Calu3 (cell line): ENCODE measurements at regions of chr3 and their contacts with region 1.

Region 1: DNA sequence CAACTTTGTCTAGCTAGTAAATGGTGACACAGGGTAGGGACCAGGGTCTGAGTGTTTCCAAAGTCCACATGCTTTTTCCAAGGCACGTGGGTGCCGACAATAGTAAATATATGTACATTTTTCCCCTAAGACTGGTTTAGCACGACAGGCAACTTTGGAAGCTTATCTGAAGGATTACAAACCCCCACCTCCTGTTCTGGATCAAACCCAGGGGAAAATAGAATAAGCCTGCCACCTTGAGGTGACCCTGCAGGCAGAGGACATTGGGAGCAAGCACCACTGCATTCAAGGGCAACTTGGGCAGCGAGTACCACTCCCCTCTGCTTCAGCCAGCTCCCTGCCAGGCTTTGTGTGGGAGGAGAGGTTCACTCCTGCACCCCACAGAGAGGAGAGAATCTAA is 44.8 kb downstream of the KBTBD12 start:
- DNase-seq: peak; percentile 82
- H3K4me3 Mint-ChIP-seq: no peak overlapping the region
- H3K27ac Mint-ChIP-seq: no peak overlapping the region
- H3K4me1 Mint-ChIP-seq: peaks cover 31% of the 10 kb centered on the region
- H3K27me3 Mint-ChIP-seq: no peaks in the 10 kb centered on the region
- CTCF ChIP-seq: peak; percentile 67

Region 2: GRCh38 chr3:127652231-127652995 is 307.4 kb before region 1 on chr3:
- CTCF ChIA-PET with region 1: no interaction called
- intact Hi-C with region 1: loop called (anchors 2 kb)
- DNase-seq: peak; percentile 78
- H3K4me3 Mint-ChIP-seq: no peak overlapping the region
- H3K27ac Mint-ChIP-seq: no peak overlapping the region
- H3K4me1 Mint-ChIP-seq: no peaks in the 10 kb centered on the region
- H3K27me3 Mint-ChIP-seq: no peaks in the 10 kb centered on the region
- CTCF ChIP-seq: peak; percentile 97

Region 3: DNA sequence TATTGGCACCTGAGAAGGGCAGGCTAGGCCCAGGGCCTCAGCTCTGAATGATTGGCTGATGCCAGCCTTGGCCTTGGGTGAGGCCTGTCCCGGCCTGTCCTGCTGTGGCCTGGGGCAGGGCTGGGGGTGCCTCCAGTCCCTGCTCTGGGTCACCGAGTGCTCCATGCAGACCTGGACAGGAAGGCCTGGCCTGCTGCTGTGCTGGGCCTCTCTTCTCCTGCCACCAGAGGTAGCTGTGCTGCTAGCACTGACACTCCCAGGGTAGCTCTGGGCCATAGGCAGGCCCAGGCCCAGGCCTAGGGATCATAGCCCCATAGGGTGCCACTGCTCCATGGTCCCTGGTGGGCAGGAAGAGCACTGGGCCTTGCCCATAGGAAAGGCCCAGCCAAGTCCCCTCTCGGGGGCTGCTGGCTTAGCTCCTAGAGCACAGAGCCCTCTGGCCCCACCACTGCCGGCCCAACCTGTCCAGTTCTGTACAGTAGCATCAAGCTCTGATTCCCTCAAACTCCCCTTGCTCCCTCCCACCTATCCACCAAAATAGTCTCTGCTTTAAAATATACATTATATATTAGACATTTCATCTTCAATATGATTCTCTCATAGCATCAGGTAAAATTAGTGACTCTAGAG is 268.9 kb before region 1 on chr3:
- CTCF ChIA-PET with region 1: interaction called, 30 read pairs
- intact Hi-C with region 1: loop called (anchors 2 kb)
- DNase-seq: peak; percentile 81
- H3K4me3 Mint-ChIP-seq: no peak overlapping the region
- H3K27ac Mint-ChIP-seq: no peak overlapping the region
- H3K4me1 Mint-ChIP-seq: no peaks in the 10 kb centered on the region
- H3K27me3 Mint-ChIP-seq: no peaks in the 10 kb centered on the region
- CTCF ChIP-seq: peak; percentile 75

Region 4: GRCh38 chr3:127697551-127698240 is 262.1 kb before region 1 on chr3:
- CTCF ChIA-PET with region 1: interaction called, 18 read pairs
- intact Hi-C with region 1: no loop called
- DNase-seq: peak; percentile 73
- H3K4me3 Mint-ChIP-seq: no peak overlapping the region
- H3K27ac Mint-ChIP-seq: peak overlapping the region; percentile 19
- H3K4me1 Mint-ChIP-seq: no peaks in the 10 kb centered on the region
- H3K27me3 Mint-ChIP-seq: no peaks in the 10 kb centered on the region
- CTCF ChIP-seq: no peak

Region 5: DNA sequence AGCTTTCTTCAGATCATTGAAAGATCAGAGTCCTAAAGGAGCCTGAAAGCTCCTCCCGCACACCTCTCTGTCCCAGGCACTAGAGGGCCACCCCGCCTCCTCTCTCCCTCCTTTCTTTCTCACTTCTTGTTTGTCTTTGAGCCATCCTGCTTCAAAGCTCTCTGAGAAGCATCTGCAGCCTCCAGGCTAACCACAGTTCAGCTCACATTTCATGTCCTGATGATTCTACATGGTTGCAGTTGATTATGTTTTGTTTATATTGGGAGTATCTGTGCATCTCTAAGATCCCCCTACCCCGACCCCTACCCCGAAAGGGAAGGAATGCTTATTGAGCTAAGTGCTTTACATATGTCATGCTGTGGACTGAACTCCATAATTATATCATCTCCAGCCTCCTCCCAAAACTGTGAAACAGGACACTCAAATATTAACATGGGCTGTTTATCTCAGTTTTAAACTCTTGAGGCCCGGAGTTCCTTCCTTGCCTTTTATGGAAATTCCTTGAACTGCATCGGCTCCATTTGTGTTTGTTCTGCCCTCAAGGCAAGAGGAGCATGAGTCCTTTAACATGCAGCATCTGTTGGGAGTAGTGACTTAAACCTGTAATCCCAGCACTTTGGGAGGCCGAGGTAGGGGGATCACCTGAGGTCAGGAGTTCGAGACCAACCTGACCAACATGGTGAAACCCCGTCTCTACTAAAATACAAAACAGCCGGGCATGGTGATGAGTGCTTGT is 168.5 kb before region 1 on chr3:
- CTCF ChIA-PET with region 1: interaction called, 16 read pairs
- intact Hi-C with region 1: loop called (anchors 5 kb)
- DNase-seq: peak; percentile 75
- H3K4me3 Mint-ChIP-seq: no peak overlapping the region
- H3K27ac Mint-ChIP-seq: no peak overlapping the region
- H3K4me1 Mint-ChIP-seq: peaks cover 29% of the 10 kb centered on the region
- H3K27me3 Mint-ChIP-seq: no peaks in the 10 kb centered on the region
- CTCF ChIP-seq: no peak

Region 6: DNA sequence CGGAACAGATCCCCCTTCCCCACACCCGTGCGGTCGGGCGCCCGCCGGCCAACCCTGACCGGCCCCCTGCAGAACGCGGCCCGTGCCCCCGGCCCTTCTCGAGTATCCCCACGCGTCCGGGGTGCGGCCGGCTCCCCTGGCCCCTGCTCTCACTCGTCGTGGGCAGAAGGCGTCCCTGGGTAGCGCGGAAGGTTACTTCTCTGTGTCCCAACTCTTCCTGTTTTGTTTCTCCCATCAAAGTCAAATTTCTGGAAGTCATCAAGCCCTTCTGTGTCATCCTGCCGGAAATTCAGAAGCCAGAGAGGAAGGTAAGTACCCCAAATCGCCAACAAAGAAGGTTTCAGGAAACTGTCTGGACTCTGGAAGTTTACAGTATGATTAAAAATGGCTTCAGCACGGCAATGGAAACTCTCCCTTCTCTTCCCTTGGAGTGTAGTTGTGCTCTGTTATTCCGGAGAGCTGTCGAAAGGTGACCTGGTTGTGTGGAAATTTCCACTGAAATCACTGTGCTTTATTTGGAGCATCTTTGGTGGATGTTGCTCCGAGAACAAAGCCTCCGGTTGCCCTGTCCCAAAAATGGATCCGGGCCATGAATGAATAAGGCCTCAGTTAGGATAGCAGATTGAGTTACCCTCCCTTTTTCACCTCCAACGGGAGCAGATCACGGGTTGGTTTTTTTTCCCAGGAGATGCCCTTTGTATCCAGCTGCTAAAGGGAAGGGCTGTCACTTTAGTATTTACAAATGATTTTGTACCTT is 92.9 kb after region 1 on chr3:
- CTCF ChIA-PET with region 1: no interaction called
- intact Hi-C with region 1: no loop called
- DNase-seq: no peak
- H3K4me3 Mint-ChIP-seq: peak overlapping the region; percentile 89
- H3K27ac Mint-ChIP-seq: peak overlapping the region; percentile 93
- H3K4me1 Mint-ChIP-seq: peaks cover 42% of the 10 kb centered on the region
- H3K27me3 Mint-ChIP-seq: no peaks in the 10 kb centered on the region
- CTCF ChIP-seq: no peak